Endothelial cell of umbilical vein (primary cell): ENCODE measurements at regions of chr10 and their contacts with region 1.

Region 1: DNA sequence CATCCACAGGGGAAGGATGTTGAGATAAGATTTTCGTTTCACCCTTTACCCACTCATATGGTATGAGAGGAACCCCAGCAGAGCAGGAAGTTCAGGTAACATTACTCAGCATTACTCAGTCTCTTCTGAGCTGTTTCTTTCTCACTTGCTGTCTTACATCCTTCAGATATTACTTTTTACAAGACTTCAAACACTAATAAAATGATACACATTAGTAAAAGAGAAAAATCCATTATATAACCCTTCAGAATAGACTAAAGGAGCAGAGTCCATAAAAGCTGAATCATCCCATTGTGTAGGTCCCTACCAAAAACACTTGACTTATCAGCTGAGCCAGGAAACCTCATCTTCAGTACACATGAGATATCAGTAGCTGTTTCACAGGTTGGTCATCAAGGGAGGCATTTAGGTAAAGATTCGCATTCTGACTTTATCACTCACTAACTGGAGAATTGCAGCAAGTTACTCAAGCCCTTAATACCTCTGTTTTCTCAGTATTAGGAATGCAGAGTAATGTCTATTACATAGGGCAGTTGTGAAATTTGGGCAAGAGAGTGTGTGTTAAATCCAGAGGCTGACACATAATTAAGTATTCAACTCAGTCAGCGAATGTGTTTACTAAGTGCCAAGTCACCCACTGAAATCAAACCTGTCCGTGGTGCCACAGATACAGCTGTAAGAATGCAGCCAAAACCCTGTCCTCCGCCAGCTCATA is 44.7 kb downstream of the KLF6 start:
- DNase-seq: peak; percentile 38
- H3K4me3 ChIP-seq: no peak overlapping the region
- H3K27ac ChIP-seq: peak overlapping the region; percentile 31
- H3K4me1 ChIP-seq: peaks cover 13% of the 10 kb centered on the region
- H3K27me3 ChIP-seq: no peaks in the 10 kb centered on the region
- CTCF ChIP-seq: no peak
- POLR2A ChIP-seq: no peak

Region 2: DNA sequence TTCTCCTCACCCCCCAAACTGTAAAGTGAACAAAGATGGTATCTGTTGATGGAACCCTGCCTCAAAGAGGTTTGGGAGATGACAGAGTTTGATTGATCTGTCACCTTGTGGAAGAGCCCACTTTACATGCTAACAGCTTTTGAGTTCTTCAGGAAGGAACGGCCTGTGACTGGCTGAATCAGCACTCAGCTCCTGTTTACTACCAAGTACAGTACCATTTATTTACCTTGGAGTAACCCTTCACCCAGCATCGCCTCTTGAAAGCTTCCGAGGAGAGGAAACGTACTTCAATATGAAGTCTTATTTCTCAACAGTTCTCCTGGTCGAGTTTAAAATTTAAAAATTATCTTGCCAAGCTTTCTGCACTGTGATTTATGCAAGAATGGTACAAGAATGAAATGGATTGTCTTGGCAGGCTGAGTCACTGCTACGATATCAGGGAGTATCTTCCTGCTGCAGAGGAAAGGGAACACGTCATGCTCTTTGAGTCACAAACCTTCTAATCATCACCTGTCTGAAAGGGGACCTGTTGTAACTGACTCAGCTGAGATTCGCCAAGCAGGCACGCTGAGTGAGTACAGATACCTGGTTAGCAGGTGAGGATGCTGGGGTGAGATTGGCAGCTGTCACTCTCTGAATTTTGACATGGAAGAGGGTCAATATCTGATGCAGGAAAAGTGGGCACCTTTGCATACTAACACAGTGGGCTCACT is 14.6 kb after region 1 on chr10:
- CTCF ChIA-PET with region 1: interaction called, 10 read pairs
- POLR2A ChIA-PET with region 1: no interaction called
- dilution Hi-C with region 1: no loop called
- intact Hi-C with region 1: no loop called
- DNase-seq: peak; percentile 94
- H3K4me3 ChIP-seq: no peak overlapping the region
- H3K27ac ChIP-seq: peak overlapping the region; percentile 93
- H3K4me1 ChIP-seq: peaks cover 24% of the 10 kb centered on the region
- H3K27me3 ChIP-seq: no peaks in the 10 kb centered on the region
- CTCF ChIP-seq: no peak
- POLR2A ChIP-seq: peak; percentile 43

Region 3: GRCh38 chr10:4067531-4067930 is 327.2 kb after region 1 on chr10:
- CTCF ChIA-PET with region 1: no interaction called
- POLR2A ChIA-PET with region 1: no interaction called
- dilution Hi-C with region 1: no loop called
- intact Hi-C with region 1: no loop called
- DNase-seq: no peak
- H3K4me3 ChIP-seq: no peak overlapping the region
- H3K27ac ChIP-seq: peak overlapping the region; percentile 70
- H3K4me1 ChIP-seq: peaks cover 34% of the 10 kb centered on the region
- H3K27me3 ChIP-seq: no peaks in the 10 kb centered on the region
- CTCF ChIP-seq: no peak
- POLR2A ChIP-seq: no peak